MCF 10A (cell line): ENCODE measurements at regions of chr1 and their contacts with region 1.

Region 1: DNA sequence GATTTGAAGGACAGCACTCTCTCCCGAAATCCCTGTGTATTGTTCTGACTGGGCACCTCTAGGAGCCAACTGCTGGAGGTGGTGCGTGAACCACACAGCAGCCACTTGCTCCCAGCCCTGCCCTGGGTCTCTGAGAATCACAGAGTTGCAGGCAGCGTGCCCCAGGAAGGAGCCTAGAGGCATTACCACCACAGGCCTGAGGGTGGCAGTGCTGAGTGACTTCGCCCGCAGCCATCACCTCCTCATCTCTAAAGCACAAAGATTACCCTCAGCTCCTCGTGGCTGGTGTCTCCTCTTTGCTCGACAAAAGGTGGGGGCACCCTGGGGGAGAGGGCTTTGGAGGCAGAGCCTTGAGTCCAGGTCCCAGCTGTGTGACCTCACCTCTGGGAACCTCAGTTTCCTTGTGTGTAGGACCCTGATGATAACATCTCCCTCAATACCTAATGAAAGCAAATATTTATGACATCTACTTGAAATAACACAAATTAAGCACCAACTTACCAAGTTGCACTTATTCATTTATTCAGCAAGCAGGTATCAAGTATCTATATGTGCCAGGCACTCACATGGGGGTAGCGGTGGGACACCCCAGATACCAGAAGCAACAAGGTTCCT is 86.3 kb downstream of the VWA5B1 start:
- DNase-seq: peak; percentile 48
- H3K4me3 Mint-ChIP-seq: no peak overlapping the region
- H3K27ac Mint-ChIP-seq: no peak overlapping the region
- H3K4me1 Mint-ChIP-seq: peaks cover 18% of the 10 kb centered on the region
- H3K27me3 Mint-ChIP-seq: no peaks in the 10 kb centered on the region
- CTCF ChIP-seq: peak; percentile 50

Region 2: GRCh38 chr1:20411196-20411980 is 34.4 kb after region 1 on chr1:
- CTCF ChIA-PET with region 1: interaction called, 3 read pairs
- POLR2A ChIA-PET with region 1: no interaction called
- intact Hi-C with region 1: loop called (anchors 5 kb)
- DNase-seq: peak; percentile 83
- H3K4me3 Mint-ChIP-seq: no peak overlapping the region
- H3K27ac Mint-ChIP-seq: no peak overlapping the region
- H3K4me1 Mint-ChIP-seq: peaks cover 13% of the 10 kb centered on the region
- H3K27me3 Mint-ChIP-seq: no peaks in the 10 kb centered on the region
- CTCF ChIP-seq: no peak

Region 3: DNA sequence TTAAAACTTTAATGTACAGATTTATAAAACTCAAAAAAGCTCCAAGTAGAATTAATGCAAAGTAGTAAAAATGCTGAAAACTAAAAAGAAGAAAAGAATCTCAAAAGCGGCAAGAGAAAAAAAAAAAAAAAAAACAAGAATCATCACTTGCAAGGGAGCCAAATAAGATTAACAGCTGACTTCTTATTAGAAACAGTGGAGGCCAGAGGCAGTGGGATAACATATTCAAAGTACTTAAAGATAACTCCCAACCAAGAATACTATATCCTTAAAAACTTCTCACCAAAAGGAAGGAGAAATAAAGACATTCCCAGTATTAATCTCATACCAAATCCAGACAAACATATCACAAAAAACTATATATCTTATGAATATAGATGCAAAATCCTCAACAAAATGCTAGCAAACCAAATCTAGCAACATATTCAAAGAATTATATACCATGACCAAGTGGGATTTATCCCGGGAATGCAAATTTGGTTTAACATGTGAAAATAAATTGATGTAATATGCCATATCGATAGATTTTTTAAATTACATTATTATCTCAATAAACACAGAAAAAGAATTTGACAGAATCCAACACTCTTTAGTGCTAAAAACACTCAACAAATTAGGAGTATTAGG is 46.3 kb after region 1 on chr1:
- CTCF ChIA-PET with region 1: no interaction called
- POLR2A ChIA-PET with region 1: no interaction called
- intact Hi-C with region 1: no loop called
- DNase-seq: no peak
- H3K4me3 Mint-ChIP-seq: no peak overlapping the region
- H3K27ac Mint-ChIP-seq: no peak overlapping the region
- H3K4me1 Mint-ChIP-seq: peaks cover 7% of the 10 kb centered on the region
- H3K27me3 Mint-ChIP-seq: peaks cover 34% of the 10 kb centered on the region
- CTCF ChIP-seq: no peak